ENCODE measurements at regions of chr14 and their contacts with region 1.

Region 1: GRCh38 chr14:95431199-95432143 is 85.0 kb downstream of the SYNE3 start:
- DNase-seq: peak; percentile 65
- H3K4me3 ChIP-seq: no peak overlapping the region
- H3K27ac ChIP-seq: no peak overlapping the region
- H3K4me1 ChIP-seq: peaks cover 3% of the 10 kb centered on the region
- CTCF ChIP-seq: peak; percentile 82

Region 2: GRCh38 chr14:95106971-95107370 is 324.5 kb before region 1 on chr14:
- CTCF ChIA-PET with region 1: interaction called, 3 read pairs
- POLR2A ChIA-PET with region 1: no interaction called
- intact Hi-C with region 1: loop called (anchors 10 kb)
- DNase-seq: no peak
- H3K4me3 ChIP-seq: no peak overlapping the region
- H3K27ac ChIP-seq: no peak overlapping the region
- H3K4me1 ChIP-seq: no peaks in the 10 kb centered on the region
- CTCF ChIP-seq: no peak

Region 3: DNA sequence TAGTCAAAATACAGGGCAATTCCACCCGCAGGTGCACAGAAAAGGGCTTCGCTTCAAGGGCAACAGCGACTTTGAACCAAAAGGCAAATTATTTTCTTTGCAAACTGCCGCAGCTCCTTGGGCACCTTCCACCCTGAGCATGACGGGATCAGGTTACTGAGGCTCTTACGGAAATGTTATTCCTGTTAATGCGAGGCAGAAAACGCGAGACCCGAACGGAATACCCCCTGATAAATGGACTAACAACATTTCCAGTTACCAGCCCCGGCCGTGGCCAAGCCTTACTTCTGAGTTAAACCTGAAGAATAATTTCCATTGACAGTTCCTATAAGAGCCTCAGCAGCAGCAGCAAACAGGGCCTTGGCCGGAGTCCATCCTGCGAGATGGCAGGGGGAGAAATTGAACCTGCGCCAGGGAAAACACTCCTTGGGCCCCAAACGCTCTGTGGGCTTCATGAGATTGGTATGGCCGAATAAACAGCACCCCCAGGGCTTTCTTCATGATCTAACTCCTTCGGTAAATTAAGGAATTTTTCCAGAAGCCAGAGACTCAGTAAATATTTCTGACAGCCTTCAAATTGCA is 204.1 kb before region 1 on chr14:
- CTCF ChIA-PET with region 1: no interaction called
- POLR2A ChIA-PET with region 1: no interaction called
- intact Hi-C with region 1: no loop called
- DNase-seq: no peak
- H3K4me3 ChIP-seq: no peak overlapping the region
- H3K27ac ChIP-seq: no peak overlapping the region
- H3K4me1 ChIP-seq: no peaks in the 10 kb centered on the region
- CTCF ChIP-seq: no peak

Region 4: GRCh38 chr14:95569440-95569839 is 138.0 kb after region 1 on chr14:
- CTCF ChIA-PET with region 1: no interaction called
- POLR2A ChIA-PET with region 1: no interaction called
- intact Hi-C with region 1: no loop called
- DNase-seq: no peak
- H3K4me3 ChIP-seq: no peak overlapping the region
- H3K27ac ChIP-seq: no peak overlapping the region
- H3K4me1 ChIP-seq: no peaks in the 10 kb centered on the region
- CTCF ChIP-seq: no peak

Measured in OCI-LY7 (cell line).